ENCODE measurements at regions of chr1 and their contacts with region 1.

Region 1: DNA sequence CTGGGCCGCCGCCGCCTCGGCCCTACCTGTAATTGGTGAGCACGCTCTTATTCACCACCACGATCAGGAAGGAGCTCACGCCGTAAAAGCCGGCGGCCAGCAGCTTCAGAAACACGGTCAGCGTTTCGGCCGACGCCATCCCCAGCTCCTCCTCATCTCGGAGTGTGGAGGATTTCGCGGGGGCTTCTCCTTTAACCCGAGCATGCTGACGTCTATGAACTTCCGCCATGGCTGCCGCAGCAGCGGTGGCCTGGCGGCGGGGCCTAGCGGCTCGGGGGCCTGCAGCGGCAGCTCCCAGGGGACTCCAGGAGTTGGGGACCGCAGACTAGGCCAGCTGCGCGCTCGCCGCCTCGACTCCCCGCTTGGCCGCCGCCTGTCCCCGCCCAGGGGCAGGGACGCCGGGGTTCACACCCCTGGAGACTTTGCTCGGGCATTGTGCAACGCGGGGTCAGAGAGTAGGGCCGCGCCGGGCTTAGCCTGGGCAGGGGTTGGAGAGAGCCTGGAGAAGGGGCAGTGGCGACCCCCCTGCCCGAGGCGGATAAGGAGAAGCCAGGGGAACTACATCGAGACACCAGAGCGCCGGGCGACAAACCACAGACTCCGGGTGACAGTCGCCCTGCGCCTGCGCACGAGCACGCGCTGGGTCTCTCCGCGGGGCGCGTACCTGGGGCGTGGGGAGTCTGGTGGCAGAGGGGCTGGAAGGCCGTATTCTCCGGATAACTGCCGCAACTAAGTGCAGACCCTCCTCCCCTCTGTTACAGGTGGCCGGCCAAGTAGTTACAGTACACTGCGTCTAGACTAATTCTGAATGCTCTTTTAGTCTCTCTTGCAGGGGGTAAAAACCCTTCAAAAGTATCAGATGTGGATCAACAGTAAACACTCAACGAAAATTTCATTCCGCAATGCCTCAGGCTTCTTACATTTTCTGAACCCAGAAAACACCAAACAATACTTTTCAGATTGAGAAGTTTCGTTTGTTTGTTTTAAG is at the start of gene SLC35D1:
- H3K4me3 Mint-ChIP-seq: peak within 1 kb of the TSS; percentile 88
- H3K27ac Mint-ChIP-seq: peak within 1 kb of the TSS; percentile 92
- H3K4me1 Mint-ChIP-seq: peaks cover 24% of the 10 kb centered on the region
- H3K27me3 Mint-ChIP-seq: no peaks in the 10 kb centered on the region

Region 2: GRCh38 chr1:66929999-66930822 is 123.9 kb before region 1 on chr1:
- intact Hi-C with region 1: loop called (anchors 5 kb)
- H3K4me3 Mint-ChIP-seq: peak overlapping the region; percentile 94
- H3K27ac Mint-ChIP-seq: peak overlapping the region; percentile 96
- H3K4me1 Mint-ChIP-seq: peaks cover 33% of the 10 kb centered on the region
- H3K27me3 Mint-ChIP-seq: no peaks in the 10 kb centered on the region

Region 3: GRCh38 chr1:67019600-67020136 is 34.4 kb before region 1 on chr1:
- intact Hi-C with region 1: no loop called
- H3K4me3 Mint-ChIP-seq: no peak overlapping the region
- H3K27ac Mint-ChIP-seq: no peak overlapping the region
- H3K4me1 Mint-ChIP-seq: no peaks in the 10 kb centered on the region
- H3K27me3 Mint-ChIP-seq: no peaks in the 10 kb centered on the region

Region 4: DNA sequence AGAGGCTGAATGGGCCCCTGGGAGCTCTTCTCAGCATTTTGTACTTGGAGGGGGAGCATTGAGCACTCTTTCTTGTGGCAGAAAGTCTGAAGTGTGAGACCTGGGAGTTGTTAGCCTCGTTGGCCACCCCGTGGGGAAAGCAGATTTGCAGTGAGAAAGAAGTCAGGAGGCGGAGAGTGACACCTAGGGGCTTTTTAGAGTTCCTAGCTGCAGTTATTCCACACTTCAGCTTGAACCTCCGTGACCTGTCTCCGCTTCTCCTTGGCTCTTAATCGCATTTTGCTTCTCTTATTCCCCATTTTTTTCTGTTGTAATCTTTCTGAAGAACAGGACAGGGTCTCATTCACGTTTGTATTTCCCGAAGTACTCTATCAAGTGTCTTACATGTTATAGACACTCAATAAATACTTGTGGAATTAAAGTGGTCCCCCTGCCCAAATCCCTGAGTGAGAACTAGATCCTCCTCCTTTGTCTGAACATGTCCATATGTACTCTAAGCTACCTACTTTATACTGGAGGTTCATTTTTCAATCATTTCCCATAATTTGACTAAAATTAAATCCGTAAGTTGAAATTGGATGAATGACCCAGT is 95.2 kb after region 1 on chr1:
- intact Hi-C with region 1: loop called (anchors 10 kb)
- H3K4me3 Mint-ChIP-seq: no peak overlapping the region
- H3K27ac Mint-ChIP-seq: no peak overlapping the region
- H3K4me1 Mint-ChIP-seq: peaks cover 8% of the 10 kb centered on the region
- H3K27me3 Mint-ChIP-seq: peaks cover 5% of the 10 kb centered on the region

Measured in dendritic cell treated with granulocyte-macrophage colony-stimulating factor and Interleukin-4, amounts not matched to agents 40 ng/mL and 50 ng/mL, for 4 days (primary cell).